ENCODE measurements at regions of chr7 and their contacts with region 1.

Region 1: DNA sequence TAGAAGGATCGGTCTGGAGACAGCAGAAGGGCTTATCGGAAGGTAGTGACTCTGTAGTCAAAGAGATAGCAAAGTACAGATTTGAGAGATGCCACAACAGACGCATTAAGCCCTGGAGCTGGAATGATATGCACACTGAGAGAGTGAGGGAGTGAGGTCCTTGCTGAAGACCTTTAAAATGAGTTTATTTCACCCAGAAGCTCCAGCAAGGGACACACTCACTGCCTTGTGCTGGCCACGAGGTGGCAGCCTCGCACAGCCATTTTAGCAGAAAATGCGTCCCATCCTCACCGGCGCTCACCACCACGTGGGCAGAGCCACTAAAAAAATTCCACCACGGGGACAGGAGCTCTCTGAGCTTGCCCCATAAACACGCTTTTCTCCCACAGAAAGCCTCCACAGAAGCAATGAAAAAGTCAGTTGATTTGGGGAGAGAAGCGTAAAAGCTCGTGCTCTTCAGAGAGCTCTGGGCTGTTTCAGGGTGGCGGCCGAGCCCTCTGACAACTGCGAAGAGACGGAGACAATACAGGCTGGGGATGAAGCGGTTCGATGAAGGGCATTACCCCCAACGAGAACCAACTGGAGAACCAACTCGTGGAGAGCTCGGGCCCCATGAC is 163.0 kb upstream of the KLF14 start:
- DNase-seq: peak; percentile 82
- ATAC-seq: peak; percentile 73
- H3K4me3 Mint-ChIP-seq: no peak overlapping the region
- H3K27ac Mint-ChIP-seq: peak overlapping the region; percentile 74
- H3K4me1 Mint-ChIP-seq: peaks cover 82% of the 10 kb centered on the region
- H3K27me3 Mint-ChIP-seq: no peaks in the 10 kb centered on the region

Region 2: DNA sequence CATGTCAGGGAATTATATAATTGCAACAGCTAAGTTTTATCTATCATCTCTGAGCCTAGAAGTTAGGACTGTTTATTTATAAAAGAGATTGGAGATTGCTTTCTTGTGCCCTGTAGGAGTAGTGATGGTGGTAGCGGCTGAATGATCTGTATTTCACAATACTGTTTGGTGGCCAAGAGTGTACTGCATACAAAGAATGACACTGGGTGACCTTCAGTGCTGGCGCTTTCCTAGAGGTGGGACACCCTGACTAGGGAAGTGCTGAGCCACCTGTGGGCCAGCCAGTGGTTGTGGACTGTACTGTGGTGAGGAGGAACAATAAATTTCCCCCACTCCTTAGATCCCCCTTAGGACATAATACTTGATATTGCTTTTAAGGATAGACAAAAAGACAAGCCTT is 281.4 kb before region 1 on chr7:
- CTCF ChIA-PET with region 1: no interaction called
- DNase-seq: no peak
- ATAC-seq: no peak
- H3K4me3 Mint-ChIP-seq: no peak overlapping the region
- H3K27ac Mint-ChIP-seq: no peak overlapping the region
- H3K4me1 Mint-ChIP-seq: no peaks in the 10 kb centered on the region
- H3K27me3 Mint-ChIP-seq: no peaks in the 10 kb centered on the region

Region 3: DNA sequence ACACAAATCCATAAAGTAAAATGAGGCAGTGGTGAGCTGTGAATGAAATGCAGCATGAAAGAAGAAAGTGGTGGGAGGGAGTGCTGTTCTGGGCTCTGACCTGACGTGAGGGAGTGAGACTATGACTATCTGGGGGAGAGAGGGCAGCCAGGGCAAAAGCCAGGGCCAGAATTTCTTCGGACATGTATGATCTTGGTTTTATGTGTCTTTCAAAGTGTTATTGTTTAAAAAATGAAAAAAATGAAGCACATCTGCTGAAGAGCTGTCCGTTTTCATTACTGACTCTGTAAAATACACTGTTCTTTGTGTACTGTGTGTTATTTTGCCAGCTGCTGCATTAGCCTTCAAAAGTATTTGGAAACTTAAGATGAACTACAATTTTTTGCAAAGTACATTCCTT is 92.8 kb before region 1 on chr7:
- CTCF ChIA-PET with region 1: no interaction called
- DNase-seq: no peak
- ATAC-seq: no peak
- H3K4me3 Mint-ChIP-seq: no peak overlapping the region
- H3K27ac Mint-ChIP-seq: no peak overlapping the region
- H3K4me1 Mint-ChIP-seq: no peaks in the 10 kb centered on the region
- H3K27me3 Mint-ChIP-seq: peaks cover 30% of the 10 kb centered on the region

Region 4: GRCh38 chr7:130881091-130881798 is 15.8 kb before region 1 on chr7:
- CTCF ChIA-PET with region 1: interaction called, 20 read pairs
- DNase-seq: no peak
- ATAC-seq: no peak
- H3K4me3 Mint-ChIP-seq: no peak overlapping the region
- H3K27ac Mint-ChIP-seq: peak overlapping the region; percentile 25
- H3K4me1 Mint-ChIP-seq: peaks cover 37% of the 10 kb centered on the region
- H3K27me3 Mint-ChIP-seq: no peaks in the 10 kb centered on the region

Region 5: GRCh38 chr7:130929896-130930659 is 33.1 kb after region 1 on chr7:
- CTCF ChIA-PET with region 1: interaction called, 16 read pairs
- DNase-seq: no peak
- ATAC-seq: peak; percentile 25
- H3K4me3 Mint-ChIP-seq: no peak overlapping the region
- H3K27ac Mint-ChIP-seq: peak overlapping the region; percentile 79
- H3K4me1 Mint-ChIP-seq: peaks cover 88% of the 10 kb centered on the region
- H3K27me3 Mint-ChIP-seq: no peaks in the 10 kb centered on the region

Region 6: GRCh38 chr7:130961128-130961601 is 64.2 kb after region 1 on chr7:
- CTCF ChIA-PET with region 1: interaction called, 36 read pairs
- DNase-seq: peak; percentile 93
- ATAC-seq: peak; percentile 82
- H3K4me3 Mint-ChIP-seq: peak overlapping the region; percentile 94
- H3K27ac Mint-ChIP-seq: peak overlapping the region; percentile 100
- H3K4me1 Mint-ChIP-seq: peaks cover 48% of the 10 kb centered on the region
- H3K27me3 Mint-ChIP-seq: no peaks in the 10 kb centered on the region

Region 7: GRCh38 chr7:130996841-130997231 is 99.8 kb after region 1 on chr7:
- CTCF ChIA-PET with region 1: interaction called, 15 read pairs
- DNase-seq: no peak
- ATAC-seq: peak; percentile 62
- H3K4me3 Mint-ChIP-seq: peak overlapping the region; percentile 20
- H3K27ac Mint-ChIP-seq: peak overlapping the region; percentile 77
- H3K4me1 Mint-ChIP-seq: peaks cover 60% of the 10 kb centered on the region
- H3K27me3 Mint-ChIP-seq: no peaks in the 10 kb centered on the region

Region 8: GRCh38 chr7:131027287-131027773 is 130.3 kb after region 1 on chr7:
- CTCF ChIA-PET with region 1: interaction called, 14 read pairs
- DNase-seq: peak; percentile 69
- ATAC-seq: peak; percentile 43
- H3K4me3 Mint-ChIP-seq: peak overlapping the region; percentile 47
- H3K27ac Mint-ChIP-seq: peak overlapping the region; percentile 86
- H3K4me1 Mint-ChIP-seq: peaks cover 81% of the 10 kb centered on the region
- H3K27me3 Mint-ChIP-seq: no peaks in the 10 kb centered on the region

Region 9: DNA sequence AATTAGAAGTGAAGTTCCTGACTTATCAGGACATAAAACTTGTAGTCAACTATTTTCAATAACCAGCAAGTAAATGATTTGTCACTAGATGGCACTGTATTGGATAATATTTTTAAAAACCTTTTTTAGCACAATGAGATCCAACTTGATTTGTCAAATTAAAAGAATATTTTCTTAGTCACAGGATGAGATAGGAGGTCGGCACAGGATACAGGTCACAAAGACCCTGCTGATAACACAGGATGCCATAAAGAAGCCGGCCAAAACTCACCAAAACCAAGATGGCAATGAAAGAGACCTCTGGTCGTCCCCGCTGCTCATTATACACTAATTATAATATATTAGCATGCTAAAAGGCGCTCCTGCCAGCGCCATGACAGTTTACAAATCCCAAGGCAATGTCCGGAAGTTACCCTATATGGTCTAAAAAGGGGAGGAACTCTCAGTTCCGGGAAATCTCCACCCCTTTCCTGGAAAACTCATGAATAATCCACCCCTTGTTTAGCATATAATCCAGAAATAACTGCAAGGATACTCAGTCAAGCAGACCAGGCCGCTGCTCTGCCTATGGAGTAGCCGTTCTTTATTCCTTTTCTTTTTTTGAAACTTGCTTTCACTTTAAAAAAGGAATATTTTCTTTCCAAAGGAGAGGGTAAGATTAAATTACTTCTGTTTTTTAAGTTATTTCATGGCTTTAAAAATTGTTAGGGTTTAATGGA is 174.9 kb after region 1 on chr7:
- CTCF ChIA-PET with region 1: interaction called, 11 read pairs
- DNase-seq: peak; percentile 51
- ATAC-seq: peak; percentile 10
- H3K4me3 Mint-ChIP-seq: no peak overlapping the region
- H3K27ac Mint-ChIP-seq: peak overlapping the region; percentile 38
- H3K4me1 Mint-ChIP-seq: peaks cover 49% of the 10 kb centered on the region
- H3K27me3 Mint-ChIP-seq: no peaks in the 10 kb centered on the region